ENCODE measurements at regions of chr4 and their contacts with region 1.

Region 1: GRCh38 chr4:169612871-169613859 is 782 bp upstream of the NEK1 start:
- DNase-seq: no peak
- H3K4me3 ChIP-seq: peak overlapping the region; percentile 90
- CTCF ChIP-seq: peak; percentile 69

Region 2: DNA sequence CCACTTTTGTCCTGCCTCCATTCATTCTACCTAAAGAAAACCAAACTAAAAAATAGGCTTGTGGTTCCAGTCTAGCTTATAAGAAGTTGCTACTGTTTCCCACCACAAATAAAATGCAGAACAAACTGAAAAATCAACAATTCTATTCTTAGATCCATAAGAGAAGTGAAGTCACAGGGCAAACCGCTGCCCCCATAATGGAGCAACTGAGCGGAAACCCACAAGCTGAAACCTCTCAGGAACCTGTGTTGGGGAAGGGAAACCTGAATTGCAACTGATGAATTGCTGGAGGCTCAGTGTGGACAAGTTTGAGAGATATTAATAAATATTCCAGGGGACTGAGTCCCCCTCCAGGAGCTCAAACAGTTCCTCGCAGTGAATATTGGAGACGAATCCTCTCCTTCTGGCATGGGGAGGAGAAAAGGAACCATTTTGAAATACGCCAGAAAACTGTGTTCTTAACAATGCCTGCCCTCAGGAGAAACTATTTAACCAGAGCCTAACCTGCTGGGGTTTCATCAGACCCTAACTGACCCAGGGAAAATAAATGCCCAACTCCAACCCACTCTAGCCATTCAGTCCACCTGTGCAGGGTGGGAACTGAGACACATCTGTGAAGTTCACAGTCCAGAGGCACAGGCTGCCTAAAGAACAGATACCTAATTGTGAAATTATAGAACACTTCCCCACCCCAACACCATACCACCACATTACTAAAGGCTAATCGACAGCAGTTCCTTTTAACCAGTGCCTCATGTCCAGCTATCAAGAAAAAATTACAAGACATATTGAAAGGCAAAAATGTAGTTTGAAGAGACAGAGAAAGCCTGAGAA is 319.6 kb before region 1 on chr4:
- CTCF ChIA-PET with region 1: no interaction called
- POLR2A ChIA-PET with region 1: no interaction called
- DNase-seq: no peak
- H3K4me3 ChIP-seq: no peak overlapping the region
- CTCF ChIP-seq: no peak

Region 3: DNA sequence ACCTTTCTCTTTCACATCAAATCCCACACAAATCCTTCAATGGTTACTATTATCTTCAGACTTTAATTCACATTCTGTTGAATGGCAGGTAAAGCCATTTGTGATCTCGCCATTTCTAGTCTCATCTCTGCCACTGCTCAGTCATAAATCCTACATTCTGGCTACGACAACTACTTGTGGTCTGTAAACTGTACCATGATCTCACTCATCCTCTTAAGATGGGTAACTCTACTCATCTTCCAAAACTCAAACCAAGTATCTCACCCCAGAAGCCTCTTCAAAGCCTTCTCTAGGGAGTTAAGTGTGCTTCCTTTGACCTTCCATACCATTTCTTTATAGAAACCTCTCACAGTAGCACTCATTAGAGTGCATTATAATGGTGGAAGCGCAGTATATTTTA is 102.5 kb before region 1 on chr4:
- CTCF ChIA-PET with region 1: no interaction called
- POLR2A ChIA-PET with region 1: no interaction called
- DNase-seq: no peak
- H3K4me3 ChIP-seq: no peak overlapping the region
- CTCF ChIP-seq: no peak

Region 4: DNA sequence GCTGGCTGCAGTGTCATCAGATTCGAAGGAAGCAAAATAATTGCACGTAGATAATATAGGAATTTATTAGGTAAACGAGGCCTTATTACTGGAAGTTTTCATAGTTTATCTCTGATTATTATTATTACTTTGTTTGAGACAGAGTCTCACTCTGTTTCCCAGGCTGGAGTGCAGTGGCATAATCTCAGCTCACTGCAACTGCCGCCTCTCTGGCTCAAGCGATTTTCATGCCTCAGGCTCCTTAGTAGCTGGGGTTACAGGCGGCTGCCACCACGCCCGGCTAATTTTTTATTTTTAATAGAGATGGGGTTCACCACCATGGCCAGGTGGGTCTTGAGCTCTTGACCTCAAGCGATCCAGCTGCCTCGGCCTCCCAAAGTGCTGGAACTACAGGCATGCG is 19.7 kb after region 1 on chr4:
- CTCF ChIA-PET with region 1: interaction called, 13 read pairs
- POLR2A ChIA-PET with region 1: no interaction called
- DNase-seq: no peak
- H3K4me3 ChIP-seq: no peak overlapping the region
- CTCF ChIP-seq: no peak

Region 5: DNA sequence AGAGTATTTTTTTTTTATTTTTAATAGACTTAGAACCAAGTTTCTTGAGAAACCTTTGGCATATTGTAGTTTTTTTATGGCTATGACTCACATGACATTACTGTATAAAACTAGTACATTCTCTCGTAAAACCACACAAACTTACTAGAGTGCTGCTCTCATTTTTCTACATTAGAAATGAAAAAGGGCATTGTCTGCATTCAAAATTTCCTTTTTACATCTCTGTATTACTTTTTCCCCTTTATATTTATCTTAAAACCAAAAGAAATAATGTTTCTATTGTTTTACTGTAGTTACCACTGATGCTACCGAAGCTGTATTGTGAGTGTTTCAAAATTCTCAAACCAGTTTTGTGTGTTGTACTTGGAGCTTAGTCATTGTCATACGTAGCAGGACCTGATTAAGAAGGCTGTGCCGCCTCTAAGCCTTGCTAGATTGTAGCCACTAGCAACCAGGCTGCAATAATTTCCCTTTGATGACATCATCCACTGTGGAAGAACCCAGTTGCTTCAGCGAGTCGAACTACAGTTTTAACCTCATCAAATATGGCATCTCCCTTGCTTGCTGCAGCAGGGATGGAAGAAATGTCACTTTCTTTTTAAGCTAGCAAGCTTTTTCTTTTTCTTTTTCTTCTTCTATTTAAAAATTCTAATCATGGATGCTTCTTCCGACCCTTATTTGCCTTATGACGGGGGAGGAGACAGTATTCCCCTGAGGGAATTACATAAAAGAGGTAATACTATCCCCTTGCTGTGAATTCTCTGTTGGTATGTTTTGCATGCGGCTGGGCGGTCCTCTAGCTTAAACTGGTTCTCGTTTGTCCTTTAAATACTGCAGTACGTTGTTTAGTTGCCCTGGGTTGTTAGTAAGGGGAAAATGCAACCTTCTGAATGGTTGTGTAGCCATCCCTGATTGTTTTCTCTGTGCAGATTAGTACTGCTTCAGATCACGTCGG is 46.8 kb after region 1 on chr4:
- CTCF ChIA-PET with region 1: interaction called, 24 read pairs
- POLR2A ChIA-PET with region 1: no interaction called
- DNase-seq: peak; percentile 92
- H3K4me3 ChIP-seq: peak overlapping the region; percentile 60
- CTCF ChIP-seq: no peak

Region 6: GRCh38 chr4:169707958-169708643 is 94.9 kb after region 1 on chr4:
- CTCF ChIA-PET with region 1: interaction called, 10 read pairs
- POLR2A ChIA-PET with region 1: no interaction called
- DNase-seq: no peak
- H3K4me3 ChIP-seq: no peak overlapping the region
- CTCF ChIP-seq: no peak

Region 7: GRCh38 chr4:169791527-169792156 is 178.5 kb after region 1 on chr4:
- CTCF ChIA-PET with region 1: interaction called, 14 read pairs
- POLR2A ChIA-PET with region 1: no interaction called
- DNase-seq: no peak
- H3K4me3 ChIP-seq: peak overlapping the region; percentile 51
- CTCF ChIP-seq: peak; percentile 43

Region 8: DNA sequence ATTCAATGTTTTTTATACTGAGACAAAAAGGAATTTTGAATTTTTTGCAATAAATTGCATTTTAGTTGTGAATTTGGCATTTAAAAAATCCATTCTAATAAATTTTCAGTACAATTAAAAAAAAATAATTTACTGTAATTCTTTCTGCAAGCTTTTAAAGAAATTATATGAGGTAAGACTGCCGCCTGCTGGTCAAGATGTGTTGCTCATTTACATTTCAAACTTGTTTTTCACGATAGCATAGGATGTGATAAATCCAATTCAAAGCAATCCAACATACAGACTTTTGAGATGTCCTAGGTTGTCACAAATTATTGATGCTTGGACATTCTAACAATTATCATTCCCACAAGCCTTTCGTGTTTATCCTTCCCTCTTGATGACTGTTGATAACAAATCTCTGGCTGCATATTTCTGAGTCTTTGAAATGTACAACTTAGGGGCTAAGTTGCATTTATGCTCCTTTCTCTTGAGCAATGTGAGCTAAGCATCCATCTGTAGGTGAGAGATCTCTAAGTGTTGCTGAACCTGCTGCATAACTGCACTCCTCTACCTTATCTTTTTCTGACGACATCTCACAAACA is 434.7 kb after region 1 on chr4:
- CTCF ChIA-PET with region 1: interaction called, 15 read pairs
- POLR2A ChIA-PET with region 1: no interaction called
- DNase-seq: peak; percentile 21
- H3K4me3 ChIP-seq: no peak overlapping the region
- CTCF ChIP-seq: peak; percentile 48